HEK293 (cell line): ENCODE measurements at regions of chr14 and their contacts with region 1.

Region 1: DNA sequence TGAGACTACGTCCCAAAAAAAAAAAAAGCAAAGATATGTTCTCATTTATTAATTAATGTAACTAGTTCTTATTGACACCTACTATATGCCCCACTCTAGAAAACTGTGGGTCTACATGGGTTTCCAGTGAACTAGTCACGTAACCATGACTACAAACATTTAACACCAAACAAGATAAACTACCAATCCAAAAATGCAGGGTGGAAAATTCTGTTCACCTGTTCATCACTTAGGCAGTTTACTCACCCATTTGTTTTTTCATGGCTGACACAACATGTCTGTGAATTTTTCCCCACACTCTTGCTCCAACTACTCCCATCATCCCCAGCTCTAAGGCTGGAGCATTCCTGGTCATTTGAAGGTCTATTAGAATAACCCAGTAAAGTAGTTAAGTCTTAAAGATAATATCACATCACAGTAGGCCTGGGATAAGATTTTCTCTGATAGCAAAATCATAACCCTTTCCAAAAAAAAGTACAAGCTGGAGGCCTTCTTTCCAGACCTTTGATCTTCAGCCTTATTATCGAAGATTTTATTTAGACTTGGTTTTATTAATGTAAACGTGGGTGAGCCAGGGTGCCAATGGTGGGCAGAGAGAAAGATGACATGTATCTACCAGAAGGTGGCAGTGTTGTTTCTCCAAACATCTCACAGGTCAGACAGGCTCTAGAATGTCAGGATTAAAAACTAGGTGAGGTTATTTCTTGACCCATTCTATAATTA is 61.6 kb upstream of the DAAM1 start:
- H3K4me3 ChIP-seq: no peak overlapping the region
- H3K27ac ChIP-seq: no peak overlapping the region
- H3K4me1 ChIP-seq: peaks cover under 1% of the 10 kb centered on the region; the same call in 1 of the 2 replicates
- CTCF ChIP-seq: 0 out of 2 replicates have a peak, but pooled peaks have one; percentile 24

Region 2: GRCh38 chr14:59028476-59029202 is 98.2 kb before region 1 on chr14:
- CTCF ChIA-PET with region 1: interaction called, 38 read pairs
- POLR2A ChIA-PET with region 1: no interaction called
- H3K4me3 ChIP-seq: no peak overlapping the region
- H3K27ac ChIP-seq: no peak overlapping the region
- H3K4me1 ChIP-seq: peaks cover 3% of the 10 kb centered on the region; the same call in 1 of the 2 replicates
- CTCF ChIP-seq: peak; percentile 56; the same call in 1 of the 2 replicates

Region 3: DNA sequence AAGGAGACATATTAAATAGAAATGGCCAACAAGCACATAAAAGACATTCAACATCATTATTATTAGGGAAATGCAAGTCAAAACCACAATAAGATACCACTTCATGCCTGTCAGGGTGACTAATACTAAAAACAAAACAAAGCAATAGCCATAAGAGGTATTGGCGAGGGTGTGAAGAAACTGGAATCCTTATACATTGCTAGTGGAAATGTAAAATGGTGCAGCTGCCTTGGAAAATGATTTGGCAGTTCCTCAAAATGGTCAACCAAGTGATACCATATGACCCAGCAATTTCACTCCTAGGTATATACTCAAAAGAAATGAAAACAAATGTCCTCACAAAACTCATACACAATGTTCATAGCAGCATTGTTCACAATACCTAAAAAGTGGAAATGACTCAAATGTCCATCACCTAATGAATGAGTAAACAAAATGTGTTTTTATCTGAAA is 311.4 kb after region 1 on chr14:
- CTCF ChIA-PET with region 1: interaction called, 23 read pairs
- POLR2A ChIA-PET with region 1: interaction called, 4 read pairs
- H3K4me3 ChIP-seq: no peak overlapping the region
- H3K27ac ChIP-seq: no peak overlapping the region
- H3K4me1 ChIP-seq: no peaks in the 10 kb centered on the region
- CTCF ChIP-seq: no peak